Endothelial cell of umbilical vein (primary cell): ENCODE measurements at regions of chr3 and their contacts with region 1.

Region 1: DNA sequence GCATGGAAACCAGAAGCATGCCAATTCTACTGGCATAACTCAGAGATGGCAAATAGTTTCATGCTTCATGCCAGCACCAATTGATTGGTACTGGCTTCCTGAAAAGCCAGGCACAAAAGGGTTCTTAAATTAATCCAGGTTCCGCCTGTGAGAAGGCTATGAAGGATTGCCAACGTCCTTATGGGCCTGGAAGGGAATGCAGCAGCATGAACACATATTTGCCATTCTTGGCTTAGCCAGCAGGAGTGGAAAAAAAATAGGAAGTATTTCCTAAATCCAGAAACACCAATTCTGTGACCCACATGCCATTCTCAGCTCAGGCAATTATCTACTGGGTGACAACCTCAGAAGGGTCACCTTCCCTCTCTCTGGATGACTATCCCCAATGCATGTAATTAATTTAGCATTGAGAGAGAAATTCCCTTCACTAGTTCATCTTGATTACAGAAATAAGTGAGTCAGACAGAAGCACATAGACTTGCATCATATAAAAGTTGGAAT is 36.0 kb downstream of the ADAMTS9 start:
- DNase-seq: peak; percentile 14
- H3K4me3 ChIP-seq: no peak overlapping the region
- H3K27ac ChIP-seq: no peak overlapping the region
- H3K4me1 ChIP-seq: peaks cover 22% of the 10 kb centered on the region
- H3K27me3 ChIP-seq: no peaks in the 10 kb centered on the region
- CTCF ChIP-seq: no peak
- POLR2A ChIP-seq: no peak

Region 2: GRCh38 chr3:64278625-64279024 is 373.2 kb before region 1 on chr3:
- CTCF ChIA-PET with region 1: no interaction called
- POLR2A ChIA-PET with region 1: no interaction called
- dilution Hi-C with region 1: no loop called
- intact Hi-C with region 1: no loop called
- DNase-seq: no peak
- H3K4me3 ChIP-seq: no peak overlapping the region
- H3K27ac ChIP-seq: no peak overlapping the region
- H3K4me1 ChIP-seq: peaks cover 4% of the 10 kb centered on the region
- H3K27me3 ChIP-seq: peaks cover 0 to 3% of the 10 kb centered on the region in 2 experiments
- CTCF ChIP-seq: no peak
- POLR2A ChIP-seq: no peak

Region 3: DNA sequence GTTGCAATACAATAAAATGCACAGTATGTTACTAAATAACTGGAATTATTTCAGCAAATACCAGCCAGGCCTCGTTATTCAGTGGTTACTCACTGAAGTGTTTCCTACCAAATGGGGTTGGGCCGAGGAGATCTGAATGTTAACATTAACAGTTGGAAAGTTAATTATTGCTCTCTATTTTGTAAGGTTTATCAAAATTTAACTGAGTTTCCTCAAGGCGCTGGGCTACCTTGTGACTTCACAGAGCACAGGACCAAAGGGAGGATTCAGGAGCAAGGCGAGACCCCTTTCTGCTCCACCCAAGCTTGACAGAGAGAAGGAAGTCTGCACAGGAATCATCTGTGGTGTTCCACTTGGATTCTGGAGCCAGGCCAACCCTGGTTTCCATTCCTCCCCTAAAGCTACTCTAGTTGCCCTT is 14.4 kb after region 1 on chr3:
- CTCF ChIA-PET with region 1: interaction called, 9 read pairs
- POLR2A ChIA-PET with region 1: no interaction called
- dilution Hi-C with region 1: no loop called
- intact Hi-C with region 1: loop called (anchors 1 kb)
- DNase-seq: peak; percentile 83
- H3K4me3 ChIP-seq: no peak overlapping the region
- H3K27ac ChIP-seq: peak overlapping the region; percentile 70
- H3K4me1 ChIP-seq: peaks cover 24% of the 10 kb centered on the region
- H3K27me3 ChIP-seq: no peaks in the 10 kb centered on the region
- CTCF ChIP-seq: no peak
- POLR2A ChIP-seq: no peak

Region 4: DNA sequence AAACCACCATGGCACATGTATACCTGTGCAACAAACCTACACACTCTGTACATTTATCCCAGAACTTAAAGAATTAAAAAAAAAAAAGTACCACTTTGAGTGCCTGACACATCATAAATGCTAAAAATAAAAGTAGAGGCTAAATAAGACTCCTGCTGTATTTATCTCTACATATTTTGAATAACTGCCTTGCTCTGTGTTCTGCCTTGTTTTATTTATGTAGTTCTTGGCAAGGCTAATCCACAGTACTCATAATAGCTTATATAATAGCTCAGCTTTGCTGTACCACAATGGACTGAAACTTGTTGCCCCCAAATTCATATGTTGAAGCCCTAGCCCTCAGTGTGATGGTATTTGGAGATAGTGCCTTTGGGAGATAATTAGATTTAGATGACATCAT is 131.4 kb after region 1 on chr3:
- CTCF ChIA-PET with region 1: no interaction called
- POLR2A ChIA-PET with region 1: no interaction called
- dilution Hi-C with region 1: no loop called
- intact Hi-C with region 1: no loop called
- DNase-seq: no peak
- H3K4me3 ChIP-seq: no peak overlapping the region
- H3K27ac ChIP-seq: no peak overlapping the region
- H3K4me1 ChIP-seq: no peaks in the 10 kb centered on the region
- H3K27me3 ChIP-seq: no peaks in the 10 kb centered on the region
- CTCF ChIP-seq: no peak
- POLR2A ChIP-seq: no peak